Vagina (tissue), 2 donors: ENCODE measurements at regions of chr10 and their contacts with region 1.

Region 1: DNA sequence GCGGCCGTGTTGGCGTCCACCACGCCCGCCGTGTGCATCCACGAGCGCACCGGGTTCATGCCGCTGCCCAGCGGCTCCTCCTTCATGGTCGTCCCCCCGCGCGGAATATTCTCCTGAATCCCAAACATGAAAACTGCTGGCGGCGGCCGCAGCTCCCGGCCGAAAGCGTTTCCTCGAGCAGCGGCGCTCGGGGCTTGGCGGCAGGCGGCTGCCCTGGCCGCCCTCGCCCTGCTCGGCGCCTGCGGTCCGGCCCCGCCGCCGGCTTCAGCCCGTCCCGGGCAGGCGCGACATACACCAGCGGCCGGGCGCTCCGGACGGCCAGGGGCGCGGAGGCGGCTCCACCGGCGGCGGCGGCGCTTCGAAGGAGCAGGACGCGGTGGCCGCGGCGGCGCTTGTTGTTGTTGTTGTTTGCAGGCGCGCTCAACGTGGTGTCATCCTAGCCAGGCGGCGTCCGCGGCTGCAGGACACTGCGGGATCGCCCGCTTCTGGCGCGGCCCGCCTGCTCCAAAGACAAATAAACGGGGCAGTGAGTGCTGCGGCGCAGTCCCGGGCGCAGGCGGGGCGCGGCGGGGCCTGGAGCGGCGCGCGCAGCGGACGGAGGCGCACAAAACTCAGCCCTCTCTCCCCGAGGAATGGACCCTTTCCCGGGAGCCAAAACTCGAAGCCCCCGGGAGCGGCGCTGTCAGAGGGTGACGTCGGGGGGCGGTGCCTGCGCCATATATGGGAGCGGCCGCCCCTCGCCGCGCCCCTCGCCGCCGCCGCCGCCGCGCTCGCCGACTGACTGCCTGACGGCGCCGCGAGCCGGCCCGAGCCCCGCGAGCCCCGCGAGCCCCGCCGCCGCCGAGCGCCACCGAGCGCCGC is at the start of gene EBF3:
- DNase-seq: peak; percentile 61 to 77
- H3K4me3 ChIP-seq: peak within 1 kb of the TSS; percentile 49 to 76
- H3K27ac ChIP-seq: peak within 1 kb of the TSS; percentile 69
- H3K4me1 ChIP-seq: peaks cover 27% of the 10 kb centered on the region
- H3K27me3 ChIP-seq: peaks cover 27% of the 10 kb centered on the region
- CTCF ChIP-seq: no peak
- POLR2A ChIP-seq: peak in 1 of 2 donors; percentile 39
- total RNA-seq, gene EBF3: 10.6 TPM

Region 2: GRCh38 chr10:129096065-129096984 is 867.5 kb before region 1 on chr10:
- intact Hi-C with region 1: loop called (anchors 5 kb)
- DNase-seq: peak; percentile 28 to 91
- H3K4me3 ChIP-seq: no peak overlapping the region
- H3K27ac ChIP-seq: peak overlapping the region; percentile 54
- H3K4me1 ChIP-seq: peaks cover 19% of the 10 kb centered on the region
- H3K27me3 ChIP-seq: no peaks in the 10 kb centered on the region
- CTCF ChIP-seq: no peak
- POLR2A ChIP-seq: no peak

Region 3: GRCh38 chr10:129305046-129305445 is 658.8 kb before region 1 on chr10:
- intact Hi-C with region 1: no loop called
- DNase-seq: no peak
- H3K4me3 ChIP-seq: no peak overlapping the region
- H3K27ac ChIP-seq: no peak overlapping the region
- H3K4me1 ChIP-seq: no peaks in the 10 kb centered on the region
- H3K27me3 ChIP-seq: no peaks in the 10 kb centered on the region
- CTCF ChIP-seq: no peak
- POLR2A ChIP-seq: no peak

Region 4: GRCh38 chr10:129694691-129695243 is 269.1 kb before region 1 on chr10:
- intact Hi-C with region 1: loop called (anchors 10 kb)
- DNase-seq: peak in 1 of 2 donors; percentile 77
- H3K4me3 ChIP-seq: no peak overlapping the region
- H3K27ac ChIP-seq: no peak overlapping the region
- H3K4me1 ChIP-seq: peaks cover 48% of the 10 kb centered on the region
- H3K27me3 ChIP-seq: no peaks in the 10 kb centered on the region
- CTCF ChIP-seq: no peak
- POLR2A ChIP-seq: no peak

Region 5: DNA sequence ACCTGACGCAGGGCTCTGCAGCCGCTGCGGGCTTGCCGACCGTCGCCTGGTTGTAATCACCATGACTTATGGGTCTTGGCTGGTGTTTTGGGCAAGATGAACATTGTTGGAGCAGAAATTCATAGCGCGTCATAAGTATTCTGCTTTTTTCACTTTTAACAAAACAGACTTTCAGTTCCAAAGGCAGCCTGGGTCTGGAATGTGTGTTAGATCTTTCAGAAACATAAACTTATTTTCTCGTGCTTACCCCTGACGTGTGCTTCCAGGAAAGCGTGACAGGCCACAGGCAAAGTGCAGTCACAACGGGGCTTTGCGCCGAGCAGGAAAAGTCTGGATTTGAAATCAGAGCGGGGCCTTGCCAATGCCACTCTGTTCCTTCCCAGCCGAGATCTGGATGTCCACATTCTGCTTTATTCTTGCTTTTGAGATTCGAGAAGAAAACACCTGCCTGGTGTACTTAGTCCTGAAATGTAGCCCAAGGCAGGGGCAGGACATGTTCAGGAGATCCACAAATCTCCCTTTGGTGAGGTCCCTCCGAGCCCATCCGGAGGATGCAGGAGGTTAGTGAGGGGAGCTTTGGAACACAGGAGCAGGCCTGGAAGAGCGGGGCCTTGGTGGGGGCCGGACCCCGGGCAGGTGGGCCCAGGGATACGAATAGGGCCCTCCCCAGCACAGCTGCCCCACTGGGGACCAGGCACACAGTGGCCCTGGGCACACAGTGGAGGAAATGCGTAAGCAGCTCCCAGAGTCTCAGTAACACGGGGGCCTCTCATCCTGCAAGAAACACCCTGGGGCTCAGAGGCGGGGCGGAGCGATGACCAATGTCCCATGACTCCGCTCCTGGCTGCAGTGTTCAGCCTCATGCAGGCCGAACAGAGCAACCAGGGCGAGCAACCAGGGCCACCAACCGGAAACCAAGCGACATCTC is 49.7 kb after region 1 on chr10:
- intact Hi-C with region 1: no loop called
- DNase-seq: peak in 1 of 2 donors; percentile 80
- H3K4me3 ChIP-seq: no peak overlapping the region
- H3K27ac ChIP-seq: no peak overlapping the region
- H3K4me1 ChIP-seq: no peaks in the 10 kb centered on the region
- H3K27me3 ChIP-seq: no peaks in the 10 kb centered on the region
- CTCF ChIP-seq: no peak
- POLR2A ChIP-seq: no peak

Region 6: GRCh38 chr10:130045091-130045652 is 81.3 kb after region 1 on chr10:
- intact Hi-C with region 1: no loop called
- DNase-seq: no peak
- H3K4me3 ChIP-seq: no peak overlapping the region
- H3K27ac ChIP-seq: no peak overlapping the region
- H3K4me1 ChIP-seq: no peaks in the 10 kb centered on the region
- H3K27me3 ChIP-seq: no peaks in the 10 kb centered on the region
- CTCF ChIP-seq: no peak
- POLR2A ChIP-seq: no peak